ENCODE measurements at regions of chr19 and their contacts with region 1.

Region 1: DNA sequence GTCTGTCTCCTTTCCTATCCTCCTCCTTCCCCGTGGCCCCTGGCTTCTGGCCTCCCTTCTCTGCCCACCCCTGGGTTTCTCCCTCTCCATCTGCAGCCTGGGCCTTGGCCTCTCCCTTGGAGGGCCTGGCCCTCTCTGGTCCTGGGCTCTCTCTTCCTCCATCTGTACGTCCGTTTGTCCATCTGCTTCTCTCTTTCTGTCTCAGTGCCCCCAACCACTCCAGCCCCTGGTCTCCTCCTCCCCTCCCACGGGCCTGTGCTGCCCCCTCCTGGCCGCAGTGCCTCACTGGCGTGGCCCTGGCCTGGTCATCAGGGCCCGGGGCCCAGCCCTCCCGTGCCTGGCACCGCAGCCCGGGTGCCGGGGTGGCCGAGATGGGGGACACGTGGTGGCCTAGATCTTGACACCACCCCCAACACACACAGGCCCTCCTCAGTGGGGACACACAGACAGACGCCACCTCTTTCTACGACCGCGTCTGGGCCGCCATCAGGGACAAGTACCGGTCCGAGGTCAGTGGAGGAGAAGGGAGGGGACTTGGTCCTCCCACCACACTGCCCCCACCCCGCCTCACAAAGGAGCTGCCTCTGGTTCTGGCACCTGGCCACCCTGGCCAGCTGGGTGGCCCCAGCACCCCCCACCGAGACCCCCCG is 11.3 kb downstream of the PRKCSH start:
- DNase-seq: peak in 2 of 3 donors; percentile 66 to 69
- ATAC-seq: peak; percentile 54 to 81 (median 74)
- H3K4me3 ChIP-seq: no peak overlapping the region
- H3K27ac ChIP-seq: no peak overlapping the region
- H3K4me1 ChIP-seq: no peaks in the 10 kb centered on the region
- H3K27me3 ChIP-seq: no peaks in the 10 kb centered on the region
- CTCF ChIP-seq: peak; percentile 61 to 81 (median 70)
- POLR2A ChIP-seq: no peak

Region 2: DNA sequence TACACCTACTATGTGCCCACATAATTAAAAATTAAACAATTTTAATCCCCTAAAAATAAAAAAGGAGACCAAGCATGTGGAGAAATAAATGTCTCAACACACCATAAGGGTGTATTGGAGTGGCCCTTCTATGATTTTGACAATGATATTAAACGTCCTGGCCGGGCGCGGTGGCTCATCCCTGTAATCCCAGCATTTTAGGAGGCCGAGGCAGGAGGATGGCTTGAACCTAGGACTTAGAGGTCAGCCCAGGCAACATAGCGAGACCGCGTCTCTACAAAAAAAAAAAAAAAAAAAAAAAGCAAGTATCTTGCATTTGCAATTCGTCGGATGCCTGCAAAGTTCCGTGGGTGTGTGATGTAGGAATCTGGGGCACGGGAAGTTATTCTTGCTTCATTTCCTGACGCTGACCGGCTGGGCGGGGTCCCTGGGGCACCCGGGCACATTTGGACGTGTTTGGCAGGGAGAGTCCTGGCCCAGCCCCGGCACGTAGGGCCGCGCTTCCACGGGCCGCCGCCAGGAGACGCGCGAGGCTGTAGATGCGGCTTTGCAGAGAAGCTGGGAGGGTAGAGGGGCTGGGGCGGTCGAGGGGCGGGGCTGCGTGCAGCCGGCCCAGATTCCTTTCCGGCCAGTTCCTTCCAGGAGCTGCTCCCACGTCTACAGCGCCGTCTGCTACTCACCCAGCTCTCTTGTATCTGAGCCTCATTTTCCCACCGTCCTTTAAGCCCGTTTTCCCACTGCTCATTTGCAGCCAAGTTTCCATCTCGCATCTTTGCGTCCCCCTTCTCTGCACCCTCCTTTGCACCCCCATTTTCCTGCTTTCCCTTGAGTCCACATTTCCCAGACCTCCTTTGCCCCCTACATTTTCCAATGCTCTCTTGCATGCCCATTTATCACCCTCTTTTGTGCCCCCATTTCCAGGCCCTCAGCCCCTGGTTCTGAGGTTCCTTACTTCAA is 153.1 kb before region 1 on chr19:
- intact Hi-C with region 1: loop called in 1 of 2 experiments (anchors 10 kb)
- DNase-seq: peak; percentile 94 to 95 (median 94)
- ATAC-seq: peak; percentile 99 to 100 (median 99)
- H3K4me3 ChIP-seq: no peak overlapping the region
- H3K27ac ChIP-seq: no peak overlapping the region
- H3K4me1 ChIP-seq: peaks cover 0 to 5% (median 0%) of the 10 kb centered on the region in 4 donors
- H3K27me3 ChIP-seq: no peaks in the 10 kb centered on the region
- CTCF ChIP-seq: peak; percentile 96 to 99 (median 98)
- POLR2A ChIP-seq: no peak

Region 3: GRCh38 chr19:11380653-11381534 is 65.9 kb before region 1 on chr19:
- intact Hi-C with region 1: loop called in 1 of 2 experiments (anchors 10 kb)
- DNase-seq: peak; percentile 91 to 95 (median 92)
- ATAC-seq: peak; percentile 68 to 87 (median 84)
- H3K4me3 ChIP-seq: peak overlapping the region; percentile 51 to 59 (median 52)
- H3K27ac ChIP-seq: peak overlapping the region; percentile 60 to 83 (median 73)
- H3K4me1 ChIP-seq: peaks cover 0 to 25% (median 10%) of the 10 kb centered on the region in 4 donors
- H3K27me3 ChIP-seq: no peaks in the 10 kb centered on the region
- CTCF ChIP-seq: peak; percentile 79 to 86 (median 84)
- POLR2A ChIP-seq: peak; percentile 85

Region 4: GRCh38 chr19:11560404-11561051 is 113.8 kb after region 1 on chr19:
- intact Hi-C with region 1: no loop called
- DNase-seq: no peak
- ATAC-seq: peak; percentile 45 to 57 (median 52)
- H3K4me3 ChIP-seq: no peak overlapping the region
- H3K27ac ChIP-seq: no peak overlapping the region
- H3K4me1 ChIP-seq: peaks cover 0 to 16% (median 6%) of the 10 kb centered on the region in 4 donors
- H3K27me3 ChIP-seq: no peaks in the 10 kb centered on the region
- CTCF ChIP-seq: peak; percentile 65 to 74 (median 70)
- POLR2A ChIP-seq: no peak

Measured in right lobe of liver (tissue), 6 donors.